Endothelial cell of umbilical vein (primary cell): ENCODE measurements at regions of chrX and their contacts with region 1.

Region 1: DNA sequence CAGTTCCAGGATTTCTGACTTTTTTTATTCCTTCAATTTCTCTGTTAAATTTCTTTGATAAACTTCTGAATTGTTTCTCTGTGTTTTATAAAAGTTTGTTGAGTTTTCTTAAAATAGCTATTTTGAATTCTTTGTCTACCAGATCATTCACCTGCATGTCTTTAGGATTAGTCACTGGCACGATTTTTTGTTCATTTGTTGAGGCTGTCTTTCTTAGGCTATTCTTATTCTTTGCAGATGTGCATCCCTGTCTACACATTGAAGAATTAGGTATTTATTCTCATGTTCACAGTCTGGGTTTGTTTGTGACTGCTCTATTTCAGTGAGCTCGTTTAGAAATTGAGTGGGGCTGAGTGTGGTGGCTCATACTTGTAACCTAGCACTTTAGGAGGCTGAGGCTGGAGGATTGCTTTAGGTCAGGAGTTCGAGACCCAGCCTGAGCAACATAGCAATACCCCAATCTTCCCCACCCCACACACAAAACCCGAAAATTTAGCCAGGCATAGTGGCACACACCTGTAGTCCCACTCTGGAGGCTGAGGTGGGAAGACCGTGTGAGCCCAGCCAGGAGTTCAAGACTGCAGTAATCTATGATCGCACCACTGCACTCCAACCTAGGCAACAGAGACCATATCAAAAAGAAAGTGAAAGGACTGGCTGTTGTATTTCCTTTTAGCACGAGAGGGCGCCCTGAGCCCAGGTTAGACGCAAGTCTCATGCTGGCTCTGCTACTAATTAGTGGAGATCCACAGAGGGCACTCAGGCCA is 42.0 kb downstream of the F8 start:
- DNase-seq: peak; percentile 69
- H3K4me3 ChIP-seq: peak overlapping the region in 1 of 3 experiments; percentile 45
- H3K27ac ChIP-seq: no peak overlapping the region
- H3K4me1 ChIP-seq: peaks cover 3% of the 10 kb centered on the region
- H3K27me3 ChIP-seq: no peaks in the 10 kb centered on the region
- CTCF ChIP-seq: peak; percentile 37 to 42
- POLR2A ChIP-seq: no peak

Region 2: GRCh38 chrX:154918060-154918483 is 62.4 kb before region 1 on chrX:
- CTCF ChIA-PET with region 1: interaction called, 12 read pairs
- POLR2A ChIA-PET with region 1: no interaction called
- dilution Hi-C with region 1: no loop called
- intact Hi-C with region 1: loop called (anchors 1 kb)
- DNase-seq: peak; percentile 67
- H3K4me3 ChIP-seq: peak overlapping the region in 1 of 3 experiments; percentile 23
- H3K27ac ChIP-seq: no peak overlapping the region
- H3K4me1 ChIP-seq: no peaks in the 10 kb centered on the region
- H3K27me3 ChIP-seq: peaks cover 0 to 4% of the 10 kb centered on the region in 2 experiments
- CTCF ChIP-seq: peak; percentile 40 to 53
- POLR2A ChIP-seq: no peak

Region 3: GRCh38 chrX:155056877-155057792 is 76.6 kb after region 1 on chrX:
- CTCF ChIA-PET with region 1: interaction called, 4 read pairs
- POLR2A ChIA-PET with region 1: no interaction called
- dilution Hi-C with region 1: no loop called
- intact Hi-C with region 1: loop called (anchors 1 kb)
- DNase-seq: peak; percentile 82
- H3K4me3 ChIP-seq: no peak overlapping the region
- H3K27ac ChIP-seq: no peak overlapping the region
- H3K4me1 ChIP-seq: peaks cover 11% of the 10 kb centered on the region
- H3K27me3 ChIP-seq: no peaks in the 10 kb centered on the region
- CTCF ChIP-seq: peak; percentile 61 to 78
- POLR2A ChIP-seq: no peak

Region 4: DNA sequence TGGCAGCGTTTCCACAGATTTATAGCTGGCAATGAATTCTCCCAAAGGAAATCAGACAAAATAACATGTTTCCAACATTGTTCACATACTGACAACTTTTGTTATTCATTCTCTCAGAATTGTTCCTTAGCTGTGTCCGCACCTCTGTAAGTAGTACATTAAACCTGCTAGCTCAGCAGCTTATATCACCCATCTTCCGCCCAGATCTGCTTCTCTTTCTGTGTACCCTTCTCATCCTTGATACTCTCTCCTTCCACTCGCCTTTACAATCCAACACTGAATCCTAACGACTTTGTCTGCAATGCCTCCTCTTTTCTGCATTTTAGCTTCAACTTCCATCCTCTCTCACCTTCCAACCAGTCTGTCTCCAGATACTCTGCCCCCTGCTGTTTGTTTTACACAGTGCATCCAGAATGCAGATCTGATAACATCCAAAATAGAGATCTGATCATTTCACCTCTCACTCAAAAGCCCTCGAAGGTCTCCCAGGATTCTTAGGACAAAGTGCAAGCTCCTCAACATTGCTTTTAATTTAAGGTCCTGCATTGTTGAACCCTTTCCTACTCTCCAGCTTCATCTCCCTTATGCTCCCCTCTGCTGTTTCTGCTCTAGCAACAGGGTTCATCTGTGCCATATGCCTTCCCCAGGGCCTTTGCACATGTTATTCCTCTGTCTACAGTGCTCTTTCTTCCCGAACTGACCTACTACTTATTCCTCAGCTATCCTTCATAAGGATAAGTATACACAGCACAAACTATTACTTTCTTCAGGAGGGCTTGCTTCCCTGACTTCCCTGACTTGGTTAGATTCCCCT is 168.4 kb after region 1 on chrX:
- CTCF ChIA-PET with region 1: interaction called, 22 read pairs
- POLR2A ChIA-PET with region 1: no interaction called
- dilution Hi-C with region 1: no loop called
- intact Hi-C with region 1: loop called (anchors 1 kb)
- DNase-seq: peak; percentile 20
- H3K4me3 ChIP-seq: no peak overlapping the region
- H3K27ac ChIP-seq: no peak overlapping the region
- H3K4me1 ChIP-seq: no peaks in the 10 kb centered on the region
- H3K27me3 ChIP-seq: no peaks in the 10 kb centered on the region
- CTCF ChIP-seq: peak; percentile 37 to 42
- POLR2A ChIP-seq: no peak

Region 5: GRCh38 chrX:155819966-155820491 is 839.5 kb after region 1 on chrX:
- CTCF ChIA-PET with region 1: no interaction called
- POLR2A ChIA-PET with region 1: no interaction called
- dilution Hi-C with region 1: no loop called
- intact Hi-C with region 1: loop called (anchors 1 kb)
- DNase-seq: peak; percentile 77
- H3K4me3 ChIP-seq: no peak overlapping the region
- H3K27ac ChIP-seq: no peak overlapping the region
- H3K4me1 ChIP-seq: no peaks in the 10 kb centered on the region
- H3K27me3 ChIP-seq: no peaks in the 10 kb centered on the region
- CTCF ChIP-seq: peak; percentile 40 to 61
- POLR2A ChIP-seq: no peak